Posterior vena cava (tissue), 2 donors: ENCODE measurements at regions of chrX and their contacts with region 1.

Region 1: GRCh38 chrX:17425136-17425535 is 50.1 kb downstream of the NHS start:
- DNase-seq: no peak

Region 2: DNA sequence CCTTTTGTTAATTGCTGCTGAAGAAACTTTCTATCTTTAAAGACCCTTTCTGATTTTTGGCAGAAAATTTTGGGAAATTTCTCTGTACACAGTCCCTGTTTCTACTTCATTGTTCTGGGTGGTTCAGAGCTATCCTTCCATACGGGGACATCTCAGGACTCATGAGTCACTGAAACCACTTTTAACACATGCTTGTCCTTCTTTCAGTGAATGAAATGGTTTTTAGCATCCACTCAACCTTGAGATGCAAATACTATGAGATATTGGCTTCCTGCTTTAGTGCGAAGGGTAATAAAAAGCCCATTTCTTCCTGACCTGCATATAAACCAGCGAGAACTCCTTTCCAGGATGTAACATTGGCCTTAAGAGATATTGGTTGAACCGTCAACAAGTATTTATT is 320.7 kb before region 1 on chrX:
- intact Hi-C with region 1: loop called in 1 of 2 experiments (anchors 5 kb)
- DNase-seq: no peak

Region 3: GRCh38 chrX:17361620-17362019 is 63.5 kb before region 1 on chrX:
- intact Hi-C with region 1: no loop called
- DNase-seq: no peak

Region 4: GRCh38 chrX:17456526-17456925 is 31.4 kb after region 1 on chrX:
- intact Hi-C with region 1: loop called in 1 of 2 experiments (anchors 1 kb)
- DNase-seq: no peak

Region 5: DNA sequence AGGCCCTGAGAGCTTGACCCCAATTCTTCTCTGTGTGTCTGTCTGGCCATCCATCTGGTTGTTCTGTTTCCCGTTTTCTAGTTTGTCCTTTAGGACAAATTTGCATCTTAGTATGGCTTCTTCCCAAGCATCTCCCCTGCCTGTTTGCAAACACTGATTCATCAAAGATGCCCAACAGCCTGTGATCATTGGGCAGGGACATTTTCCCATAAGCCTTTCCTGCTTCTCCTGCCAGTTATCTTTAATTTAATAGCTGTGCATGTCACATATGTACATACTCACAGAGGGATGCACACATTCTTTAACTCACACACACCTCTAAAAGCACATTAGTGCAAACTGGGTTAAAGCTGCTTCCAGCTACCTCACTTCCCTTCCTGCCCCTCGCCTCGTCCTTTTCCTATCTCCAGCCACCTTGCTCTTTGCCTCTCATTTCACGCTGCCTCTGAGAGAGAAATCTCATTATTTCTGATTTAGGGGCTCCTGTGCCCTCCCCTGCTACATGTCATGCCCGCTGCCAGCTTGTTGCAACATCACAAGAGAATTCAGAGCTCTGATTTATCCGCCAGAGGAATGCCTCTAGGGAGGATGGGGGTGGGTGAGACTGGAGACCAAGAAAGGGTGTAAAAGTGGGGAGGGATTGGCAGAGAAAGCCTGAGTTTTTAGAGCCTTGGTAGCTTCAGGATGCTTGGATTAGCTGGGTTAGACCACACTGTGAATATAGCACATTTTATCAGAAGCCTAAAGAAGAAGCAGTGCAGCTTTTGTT is 50.5 kb after region 1 on chrX:
- intact Hi-C with region 1: no loop called
- DNase-seq: no peak

Region 6: DNA sequence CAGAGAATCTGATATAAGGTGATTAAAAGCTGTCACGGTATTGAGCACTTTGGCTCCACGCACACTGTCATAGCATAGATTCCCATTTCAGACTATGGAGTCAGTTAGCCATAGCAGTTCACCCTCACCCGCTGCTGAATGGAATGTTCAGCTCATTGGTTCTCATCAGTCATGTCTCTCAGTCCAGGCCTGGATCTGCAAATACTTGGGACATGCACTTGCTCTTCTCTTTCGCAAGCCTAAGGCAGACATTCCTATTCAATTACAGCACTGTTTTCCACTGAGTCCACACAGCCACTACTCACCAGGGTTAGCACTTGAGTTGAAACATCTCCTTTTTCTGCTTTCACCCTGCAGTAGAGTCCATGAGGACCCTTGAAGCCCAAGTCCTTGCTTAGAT is 281.5 kb after region 1 on chrX:
- intact Hi-C with region 1: no loop called
- DNase-seq: no peak

Region 7: GRCh38 chrX:18210470-18210869 is 785.3 kb after region 1 on chrX:
- intact Hi-C with region 1: no loop called
- DNase-seq: no peak